ENCODE measurements at regions of chr17 and their contacts with region 1.

Region 1: GRCh38 chr17:45385331-45385997 is 47.2 kb downstream of the ARHGAP27 start:
- DNase-seq: peak; percentile 72 to 96 (median 88)
- ATAC-seq: peak; percentile 95
- H3K4me3 ChIP-seq: no peak overlapping the region
- H3K4me3 Mint-ChIP-seq: no peak overlapping the region
- H3K27ac ChIP-seq: no peak overlapping the region
- H3K27ac Mint-ChIP-seq: no peak overlapping the region
- H3K4me1 ChIP-seq: peaks cover 10% of the 10 kb centered on the region
- H3K4me1 Mint-ChIP-seq: peaks cover 14% of the 10 kb centered on the region
- H3K27me3 ChIP-seq: peaks cover 0 to 3% of the 10 kb centered on the region in 2 experiments
- H3K27me3 Mint-ChIP-seq: peaks cover 11% of the 10 kb centered on the region
- CTCF ChIP-seq: peak; percentile 98

Region 2: DNA sequence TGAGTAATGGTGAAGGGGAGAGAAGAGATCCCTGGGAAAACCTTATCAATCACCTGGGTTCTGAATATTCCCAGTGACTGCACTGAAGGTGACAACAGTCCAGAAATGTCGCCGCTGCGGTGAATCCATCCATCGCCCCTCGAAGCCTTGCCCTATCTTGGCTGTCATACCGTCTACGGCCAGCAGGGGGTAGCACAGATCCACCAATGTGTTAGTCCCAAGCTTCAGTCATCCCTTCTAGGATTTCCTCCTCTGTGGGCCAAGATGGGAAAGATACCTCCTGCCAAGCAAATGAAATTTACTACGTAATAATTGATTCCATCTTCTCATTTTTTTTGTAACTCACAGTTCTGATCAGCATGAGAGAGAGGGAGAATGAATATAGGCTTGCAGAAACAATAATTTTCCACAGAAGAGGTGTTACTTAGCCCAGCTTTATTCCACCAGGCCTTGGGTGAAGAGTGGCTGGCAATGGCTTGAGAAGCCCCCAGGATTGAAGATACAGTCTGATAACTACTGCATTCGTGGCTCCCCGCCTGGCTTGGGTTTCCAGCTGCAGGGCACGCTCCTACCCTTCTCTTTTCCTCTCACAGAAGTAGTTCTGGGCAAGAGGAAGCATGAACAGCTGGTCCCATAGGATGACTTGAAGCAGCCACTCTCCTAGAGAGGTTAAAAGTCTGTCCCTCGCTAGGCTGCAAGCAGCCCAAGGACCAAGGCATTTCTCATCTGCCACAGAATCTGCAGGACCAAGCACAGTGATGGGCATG is 166.4 kb before region 1 on chr17:
- CTCF ChIA-PET with region 1: interaction called, 84 read pairs
- POLR2A ChIA-PET with region 1: interaction called, 7 read pairs
- intact Hi-C with region 1: loop called (anchors 1 kb)
- DNase-seq: peak; percentile 79 to 95 (median 89)
- ATAC-seq: peak; percentile 45
- H3K4me3 ChIP-seq: peak overlapping the region in 1 of 2 experiments; percentile 1
- H3K4me3 Mint-ChIP-seq: peak overlapping the region; percentile 91
- H3K27ac ChIP-seq: no peak overlapping the region
- H3K27ac Mint-ChIP-seq: peak overlapping the region; percentile 90
- H3K4me1 ChIP-seq: peaks cover 25% of the 10 kb centered on the region
- H3K4me1 Mint-ChIP-seq: peaks cover 37% of the 10 kb centered on the region
- H3K27me3 ChIP-seq: no peaks in the 10 kb centered on the region
- H3K27me3 Mint-ChIP-seq: no peaks in the 10 kb centered on the region
- CTCF ChIP-seq: peak; percentile 96

Region 3: GRCh38 chr17:45235416-45236281 is 149.8 kb before region 1 on chr17:
- CTCF ChIA-PET with region 1: interaction called, 15 read pairs
- POLR2A ChIA-PET with region 1: no interaction called
- intact Hi-C with region 1: loop called (anchors 1 kb)
- DNase-seq: peak; percentile 62 to 90 (median 83)
- ATAC-seq: peak; percentile 62
- H3K4me3 ChIP-seq: no peak overlapping the region
- H3K4me3 Mint-ChIP-seq: no peak overlapping the region
- H3K27ac ChIP-seq: peak overlapping the region in 1 of 2 experiments; percentile 60
- H3K27ac Mint-ChIP-seq: peak overlapping the region; percentile 66
- H3K4me1 ChIP-seq: peaks cover 45% of the 10 kb centered on the region
- H3K4me1 Mint-ChIP-seq: peaks cover 51% of the 10 kb centered on the region
- H3K27me3 ChIP-seq: no peaks in the 10 kb centered on the region
- H3K27me3 Mint-ChIP-seq: no peaks in the 10 kb centered on the region
- CTCF ChIP-seq: peak; percentile 71

Region 4: DNA sequence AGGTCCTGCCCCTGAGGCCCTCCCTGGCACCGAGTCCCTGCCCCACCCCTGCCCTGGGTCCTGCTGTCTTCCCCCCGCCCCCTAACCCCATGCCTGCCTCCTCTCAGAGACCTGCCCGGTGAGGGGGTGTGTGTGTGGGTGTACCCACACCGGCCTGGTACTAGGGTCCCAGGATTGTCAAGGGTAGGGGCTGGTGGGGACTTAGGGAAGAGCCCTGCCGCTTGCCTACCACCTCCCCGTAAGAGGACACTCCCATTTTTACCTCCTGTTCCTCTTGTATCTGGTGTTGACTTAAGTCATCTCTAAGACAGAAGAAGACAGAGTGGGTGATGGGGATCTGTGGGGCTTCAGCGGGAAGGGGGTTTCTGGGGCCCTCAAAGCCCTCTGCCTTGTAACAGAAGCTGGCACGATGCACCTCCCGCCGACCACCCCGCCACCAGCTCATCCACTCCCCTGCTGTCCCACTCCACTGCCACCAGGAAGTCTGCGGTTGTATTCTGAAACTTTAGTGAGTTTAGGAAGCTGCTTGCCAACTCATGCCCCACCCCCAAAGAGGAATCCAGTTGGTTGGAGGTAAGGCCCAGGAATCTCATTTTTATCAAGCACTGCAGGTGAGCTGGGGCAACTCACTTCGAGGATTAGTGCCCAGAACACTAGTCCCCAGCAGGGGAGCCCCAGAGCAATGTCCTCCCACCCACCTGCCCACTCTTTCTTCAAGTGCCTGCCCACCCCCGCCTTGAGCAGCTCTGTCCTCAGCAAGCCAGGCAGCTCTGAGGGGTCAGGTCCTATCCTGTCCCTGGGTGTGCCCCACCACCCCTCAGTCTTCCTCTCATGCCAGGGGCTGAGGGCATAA is 129.1 kb before region 1 on chr17:
- CTCF ChIA-PET with region 1: interaction called, 13 read pairs
- POLR2A ChIA-PET with region 1: interaction called, 5 read pairs
- intact Hi-C with region 1: no loop called
- DNase-seq: peak in 3 of 9 experiments; percentile 31 to 54 (median 36)
- ATAC-seq: peak; percentile 60
- H3K4me3 ChIP-seq: no peak overlapping the region
- H3K4me3 Mint-ChIP-seq: peak overlapping the region; percentile 35
- H3K27ac ChIP-seq: no peak overlapping the region
- H3K27ac Mint-ChIP-seq: peak overlapping the region; percentile 78
- H3K4me1 ChIP-seq: peaks cover 63% of the 10 kb centered on the region
- H3K4me1 Mint-ChIP-seq: peaks cover 61% of the 10 kb centered on the region
- H3K27me3 ChIP-seq: no peaks in the 10 kb centered on the region
- H3K27me3 Mint-ChIP-seq: no peaks in the 10 kb centered on the region
- CTCF ChIP-seq: no peak

Region 5: GRCh38 chr17:45284176-45285140 is 101.0 kb before region 1 on chr17:
- CTCF ChIA-PET with region 1: interaction called, 33 read pairs
- POLR2A ChIA-PET with region 1: no interaction called
- intact Hi-C with region 1: no loop called
- DNase-seq: peak in 6 of 9 experiments; percentile 42 to 58 (median 51)
- ATAC-seq: peak; percentile 36
- H3K4me3 ChIP-seq: no peak overlapping the region
- H3K4me3 Mint-ChIP-seq: no peak overlapping the region
- H3K27ac ChIP-seq: peak overlapping the region in 1 of 2 experiments; percentile 5
- H3K27ac Mint-ChIP-seq: peak overlapping the region; percentile 60
- H3K4me1 ChIP-seq: no peaks in the 10 kb centered on the region
- H3K4me1 Mint-ChIP-seq: peaks cover 10% of the 10 kb centered on the region
- H3K27me3 ChIP-seq: no peaks in the 10 kb centered on the region
- H3K27me3 Mint-ChIP-seq: no peaks in the 10 kb centered on the region
- CTCF ChIP-seq: no peak

Region 6: DNA sequence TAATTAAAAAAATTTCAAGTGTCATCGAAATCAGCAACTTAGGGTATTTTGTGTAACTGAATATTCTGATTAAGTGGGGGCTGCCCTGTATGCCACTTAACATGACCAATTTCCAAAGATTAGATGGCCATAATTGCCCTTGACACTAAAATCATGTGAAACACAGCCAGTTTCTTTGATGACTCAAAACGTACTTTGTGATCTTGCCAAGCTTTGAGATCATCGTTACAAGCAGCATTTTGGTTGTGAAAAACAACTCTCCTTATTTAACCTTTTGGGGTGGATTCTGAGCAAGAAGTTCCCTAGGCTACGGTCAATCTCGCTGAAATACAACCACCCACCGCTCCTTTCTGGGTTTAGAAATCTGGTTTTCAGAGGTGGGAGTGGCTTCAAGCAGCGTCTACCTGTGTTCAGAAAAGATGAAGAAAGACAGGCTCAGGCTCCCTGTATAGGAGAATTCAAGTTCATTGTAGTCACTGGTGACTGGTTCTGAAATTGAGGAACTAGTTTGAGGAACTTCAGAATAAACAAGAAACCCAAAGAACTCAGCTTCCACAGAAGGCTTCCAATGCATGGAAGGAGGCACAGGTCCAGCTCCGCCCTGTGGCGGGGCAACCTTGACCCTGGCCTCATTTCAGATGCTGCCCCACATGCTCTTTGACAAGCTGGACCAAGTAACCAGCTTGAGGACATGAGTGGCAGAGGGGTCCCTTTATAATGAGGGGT is 78.0 kb before region 1 on chr17:
- CTCF ChIA-PET with region 1: interaction called, 22 read pairs
- POLR2A ChIA-PET with region 1: no interaction called
- intact Hi-C with region 1: loop called in 1 of 2 experiments (anchors 2 kb)
- DNase-seq: peak in 4 of 9 experiments; percentile 36 to 65 (median 42)
- ATAC-seq: peak; percentile 55
- H3K4me3 ChIP-seq: no peak overlapping the region
- H3K4me3 Mint-ChIP-seq: peak overlapping the region; percentile 42
- H3K27ac ChIP-seq: peak overlapping the region; percentile 32 to 33
- H3K27ac Mint-ChIP-seq: peak overlapping the region; percentile 81
- H3K4me1 ChIP-seq: peaks cover 62% of the 10 kb centered on the region
- H3K4me1 Mint-ChIP-seq: peaks cover 77% of the 10 kb centered on the region
- H3K27me3 ChIP-seq: no peaks in the 10 kb centered on the region
- H3K27me3 Mint-ChIP-seq: no peaks in the 10 kb centered on the region
- CTCF ChIP-seq: no peak

Region 7: DNA sequence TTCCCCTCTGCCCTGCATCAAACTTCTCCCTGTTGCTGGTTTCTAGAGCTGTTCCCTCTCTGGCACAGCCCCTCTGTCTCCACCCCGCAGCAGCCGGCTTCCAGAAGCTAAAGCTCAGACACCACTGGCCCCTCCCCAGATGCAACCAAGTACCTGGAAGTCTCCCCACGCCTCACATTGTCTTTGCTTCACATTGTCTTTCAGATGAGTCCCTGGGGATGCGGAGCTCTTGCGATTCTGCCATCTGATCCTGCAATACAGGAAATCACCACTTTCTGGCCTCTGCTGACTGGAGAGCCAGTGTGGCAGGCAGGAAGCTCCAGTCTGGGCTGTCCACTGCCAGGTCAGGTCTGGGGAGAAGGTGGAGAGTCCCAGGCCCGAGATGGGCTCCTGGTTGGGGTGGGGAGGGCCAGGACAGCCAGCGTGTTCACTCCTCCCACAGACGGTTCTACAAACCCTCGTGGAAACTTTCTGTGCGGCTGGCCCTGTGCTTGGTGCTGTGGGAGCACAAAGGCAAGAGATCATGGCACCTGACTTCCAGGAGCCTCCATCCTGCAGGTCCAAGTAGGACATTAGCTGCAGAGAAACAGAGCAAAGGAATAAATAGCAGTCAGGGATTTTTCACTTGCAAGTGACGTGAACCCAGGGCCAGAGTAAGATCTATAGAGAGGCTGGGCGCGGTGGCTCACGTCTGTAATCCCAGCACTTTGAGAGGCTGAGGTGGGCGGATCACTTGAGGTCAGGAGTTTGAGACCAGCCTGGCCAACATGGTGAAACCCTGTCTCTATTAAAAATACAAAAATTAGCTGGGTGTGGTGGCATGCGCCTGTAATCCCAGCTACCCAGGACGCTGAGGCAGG is 20.7 kb before region 1 on chr17:
- CTCF ChIA-PET with region 1: interaction called, 18 read pairs
- POLR2A ChIA-PET with region 1: no interaction called
- intact Hi-C with region 1: no loop called
- DNase-seq: no peak
- ATAC-seq: no peak
- H3K4me3 ChIP-seq: no peak overlapping the region
- H3K4me3 Mint-ChIP-seq: no peak overlapping the region
- H3K27ac ChIP-seq: no peak overlapping the region
- H3K27ac Mint-ChIP-seq: no peak overlapping the region
- H3K4me1 ChIP-seq: no peaks in the 10 kb centered on the region
- H3K4me1 Mint-ChIP-seq: no peaks in the 10 kb centered on the region
- H3K27me3 ChIP-seq: no peaks in the 10 kb centered on the region
- H3K27me3 Mint-ChIP-seq: peaks cover 18% of the 10 kb centered on the region
- CTCF ChIP-seq: no peak

Region 8: DNA sequence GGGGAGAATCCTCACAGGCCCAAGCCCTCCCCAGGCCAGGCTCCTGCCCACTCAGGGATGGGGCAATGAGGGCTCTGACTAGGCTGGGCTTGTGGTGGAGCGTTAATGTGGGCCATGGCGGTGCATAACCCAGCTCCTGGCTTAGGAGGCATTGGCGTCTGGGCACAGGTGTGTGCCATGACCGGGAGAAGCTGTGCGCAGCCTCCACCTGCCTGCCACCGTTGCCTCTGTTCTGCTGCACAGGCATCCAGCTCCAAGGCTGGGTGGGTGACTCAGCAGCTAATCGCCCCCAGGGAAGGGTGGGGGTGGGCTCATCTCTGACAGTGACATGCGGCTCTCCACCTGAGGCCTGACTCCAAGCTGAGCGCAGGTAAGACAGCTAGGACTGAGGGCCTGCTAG is 50.7 kb after region 1 on chr17:
- CTCF ChIA-PET with region 1: no interaction called
- POLR2A ChIA-PET with region 1: no interaction called
- intact Hi-C with region 1: no loop called
- DNase-seq: no peak
- ATAC-seq: no peak
- H3K4me3 ChIP-seq: no peak overlapping the region
- H3K4me3 Mint-ChIP-seq: no peak overlapping the region
- H3K27ac ChIP-seq: no peak overlapping the region
- H3K27ac Mint-ChIP-seq: no peak overlapping the region
- H3K4me1 ChIP-seq: peaks cover 4% of the 10 kb centered on the region
- H3K4me1 Mint-ChIP-seq: peaks cover 8% of the 10 kb centered on the region
- H3K27me3 ChIP-seq: no peaks in the 10 kb centered on the region
- H3K27me3 Mint-ChIP-seq: no peaks in the 10 kb centered on the region
- CTCF ChIP-seq: no peak

Measured in CD8-positive, alpha-beta T cell (primary cell).